ENCODE measurements at regions of chr16 and their contacts with region 1.

Region 1: GRCh38 chr16:68022704-68023522 is at the starts of genes DDX28 and DUS2:
- DNase-seq: peak; percentile 93
- H3K4me3 Mint-ChIP-seq: peak within 1 kb of the TSS; percentile 96
- H3K27ac Mint-ChIP-seq: peak within 1 kb of the TSS; percentile 100
- H3K4me1 Mint-ChIP-seq: peaks cover 17% of the 10 kb centered on the region
- H3K27me3 Mint-ChIP-seq: no peaks in the 10 kb centered on the region
- total RNA-seq, gene DDX28: 19.3 TPM in 2 replicates
- total RNA-seq, gene DUS2: 31.2 and 34.3 TPM in 2 replicates

Region 2: GRCh38 chr16:67928561-67929364 is 94.2 kb before region 1 on chr16:
- intact Hi-C with region 1: no loop called
- DNase-seq: peak; percentile 68
- H3K4me3 Mint-ChIP-seq: no peak overlapping the region
- H3K27ac Mint-ChIP-seq: no peak overlapping the region
- H3K4me1 Mint-ChIP-seq: peaks cover under 1% of the 10 kb centered on the region
- H3K27me3 Mint-ChIP-seq: no peaks in the 10 kb centered on the region

Region 3: DNA sequence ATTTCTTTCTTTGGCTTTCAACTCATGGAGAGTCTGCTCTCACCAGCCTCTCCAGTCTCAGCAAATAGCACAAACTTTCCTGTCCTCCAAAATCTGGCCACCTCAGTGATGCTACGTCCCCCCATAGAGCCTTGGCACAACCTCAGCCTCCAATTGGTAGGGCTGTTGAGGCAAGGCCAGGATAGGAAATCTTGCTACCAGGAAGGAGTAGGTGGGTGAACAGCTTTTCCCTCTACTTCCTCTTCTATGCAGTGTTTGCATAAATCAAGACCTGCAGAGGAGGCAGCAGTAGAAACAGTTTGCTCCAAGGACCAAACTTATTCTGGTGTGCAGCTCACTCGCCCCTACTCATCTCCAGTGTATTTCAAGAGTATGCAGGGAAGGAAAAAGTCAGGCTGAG is 22.9 kb before region 1 on chr16:
- intact Hi-C with region 1: loop called (anchors 2 kb)
- DNase-seq: no peak
- H3K4me3 Mint-ChIP-seq: peak overlapping the region; percentile 66
- H3K27ac Mint-ChIP-seq: peak overlapping the region; percentile 90
- H3K4me1 Mint-ChIP-seq: peaks cover 37% of the 10 kb centered on the region
- H3K27me3 Mint-ChIP-seq: no peaks in the 10 kb centered on the region

Region 4: DNA sequence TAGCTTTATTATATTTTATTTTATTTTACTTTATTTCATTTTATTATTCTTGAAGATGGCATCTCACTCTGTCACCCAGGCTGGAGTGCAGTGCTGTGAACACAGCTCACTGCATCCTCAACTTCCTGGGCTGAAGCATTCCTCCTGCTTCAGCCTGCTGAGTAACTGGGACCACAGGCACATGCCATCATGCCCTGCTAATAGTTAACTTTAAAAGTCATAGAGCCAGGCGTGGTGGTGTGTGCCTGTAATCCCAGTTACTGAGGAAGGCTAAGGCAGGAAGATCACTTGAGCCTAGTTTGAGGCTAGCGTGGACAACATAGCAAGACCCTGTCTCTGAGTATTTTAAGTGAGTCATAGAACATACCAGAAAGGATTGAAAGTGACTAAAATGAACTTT is 174.3 kb after region 1 on chr16:
- intact Hi-C with region 1: no loop called
- DNase-seq: no peak
- H3K4me3 Mint-ChIP-seq: no peak overlapping the region
- H3K27ac Mint-ChIP-seq: no peak overlapping the region
- H3K4me1 Mint-ChIP-seq: peaks cover 21% of the 10 kb centered on the region
- H3K27me3 Mint-ChIP-seq: no peaks in the 10 kb centered on the region

Region 5: GRCh38 chr16:68332411-68333121 is 309.7 kb after region 1 on chr16:
- intact Hi-C with region 1: no loop called
- DNase-seq: no peak
- H3K4me3 Mint-ChIP-seq: peak overlapping the region; percentile 40
- H3K27ac Mint-ChIP-seq: peak overlapping the region; percentile 62
- H3K4me1 Mint-ChIP-seq: peaks cover 22% of the 10 kb centered on the region
- H3K27me3 Mint-ChIP-seq: no peaks in the 10 kb centered on the region

Region 6: GRCh38 chr16:68470461-68471150 is 447.7 kb after region 1 on chr16:
- intact Hi-C with region 1: no loop called
- DNase-seq: no peak
- H3K4me3 Mint-ChIP-seq: peak overlapping the region; percentile 61
- H3K27ac Mint-ChIP-seq: peak overlapping the region; percentile 56
- H3K4me1 Mint-ChIP-seq: peaks cover 23% of the 10 kb centered on the region
- H3K27me3 Mint-ChIP-seq: peaks cover 10% of the 10 kb centered on the region